B cell (primary cell): ENCODE measurements at regions of chr11 and their contacts with region 1.

Region 1: GRCh38 chr11:61332797-61333549 is at the starts of genes DDB1 and TKFC:
- DNase-seq: peak; percentile 91
- ATAC-seq: peak; percentile 93
- H3K4me3 ChIP-seq: peak within 1 kb of the TSS; percentile 75 to 97 (median 84)
- H3K4me3 Mint-ChIP-seq: peak within 1 kb of the TSS; percentile 98
- H3K27ac ChIP-seq: peak within 1 kb of the TSS; percentile 76 to 88
- H3K27ac Mint-ChIP-seq: peak within 1 kb of the TSS; percentile 97
- H3K4me1 ChIP-seq: peaks cover 30 to 35% of the 10 kb centered on the region in 2 donors
- H3K4me1 Mint-ChIP-seq: peaks cover 62% of the 10 kb centered on the region
- H3K27me3 ChIP-seq: no peaks in the 10 kb centered on the region
- H3K27me3 Mint-ChIP-seq: no peaks in the 10 kb centered on the region
- CTCF ChIP-seq: no peak
- total RNA-seq, gene DDB1: 155 and 167 TPM in 2 replicates
- total RNA-seq, gene TKFC: 68.2 and 86.3 TPM in 2 replicates

Region 2: GRCh38 chr11:60841797-60842667 is 490.9 kb before region 1 on chr11 and contains the start of gene CCDC86:
- CTCF ChIA-PET with region 1: no interaction called
- POLR2A ChIA-PET with region 1: no interaction called
- intact Hi-C with region 1: loop called (anchors 5 kb)
- DNase-seq: peak; percentile 98
- ATAC-seq: peak; percentile 97
- H3K4me3 ChIP-seq: peak within 1 kb of the TSS; percentile 54 to 97 (median 88)
- H3K4me3 Mint-ChIP-seq: peak within 1 kb of the TSS; percentile 93
- H3K27ac ChIP-seq: peak within 1 kb of the TSS; percentile 49 to 81
- H3K27ac Mint-ChIP-seq: peak within 1 kb of the TSS; percentile 93
- H3K4me1 ChIP-seq: peaks cover 32 to 33% of the 10 kb centered on the region in 2 donors
- H3K4me1 Mint-ChIP-seq: peaks cover 48% of the 10 kb centered on the region
- H3K27me3 ChIP-seq: no peaks in the 10 kb centered on the region
- H3K27me3 Mint-ChIP-seq: no peaks in the 10 kb centered on the region
- CTCF ChIP-seq: no peak
- total RNA-seq, gene CCDC86: 9.5 and 10.5 TPM in 2 replicates

Region 3: DNA sequence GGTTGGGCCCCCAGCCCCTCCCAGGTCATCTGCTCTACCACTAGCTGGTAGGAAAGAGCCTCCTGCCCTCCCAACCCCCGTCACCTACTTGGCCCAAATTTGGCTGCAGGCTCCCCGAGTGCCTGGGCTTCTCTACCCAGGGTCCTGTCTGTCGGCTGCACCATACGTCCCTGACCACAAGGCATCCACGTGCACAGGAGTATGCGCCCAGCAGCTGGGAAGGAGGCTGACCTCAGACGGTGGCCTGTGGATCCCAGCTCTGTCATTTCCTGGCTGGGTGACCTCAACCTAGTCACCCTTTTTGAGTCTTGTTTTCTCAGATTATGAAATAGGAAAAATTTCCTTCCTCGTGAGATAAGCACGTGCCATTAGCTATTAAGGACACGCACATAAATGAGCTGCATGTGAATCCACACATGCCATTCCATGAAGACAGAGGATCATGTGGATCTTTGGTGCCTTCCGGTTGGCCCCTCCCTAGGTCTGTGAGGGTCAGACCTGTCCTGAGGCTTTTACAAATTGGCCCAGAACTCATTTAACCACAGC is 15.0 kb after region 1 on chr11:
- CTCF ChIA-PET with region 1: interaction called, 436 read pairs
- POLR2A ChIA-PET with region 1: no interaction called
- intact Hi-C with region 1: no loop called
- DNase-seq: no peak
- ATAC-seq: no peak
- H3K4me3 ChIP-seq: no peak overlapping the region
- H3K4me3 Mint-ChIP-seq: no peak overlapping the region
- H3K27ac ChIP-seq: no peak overlapping the region
- H3K27ac Mint-ChIP-seq: peak overlapping the region; percentile 56
- H3K4me1 ChIP-seq: peaks cover 3 to 18% of the 10 kb centered on the region in 2 donors
- H3K4me1 Mint-ChIP-seq: peaks cover 36% of the 10 kb centered on the region
- H3K27me3 ChIP-seq: no peaks in the 10 kb centered on the region
- H3K27me3 Mint-ChIP-seq: no peaks in the 10 kb centered on the region
- CTCF ChIP-seq: no peak

Region 4: DNA sequence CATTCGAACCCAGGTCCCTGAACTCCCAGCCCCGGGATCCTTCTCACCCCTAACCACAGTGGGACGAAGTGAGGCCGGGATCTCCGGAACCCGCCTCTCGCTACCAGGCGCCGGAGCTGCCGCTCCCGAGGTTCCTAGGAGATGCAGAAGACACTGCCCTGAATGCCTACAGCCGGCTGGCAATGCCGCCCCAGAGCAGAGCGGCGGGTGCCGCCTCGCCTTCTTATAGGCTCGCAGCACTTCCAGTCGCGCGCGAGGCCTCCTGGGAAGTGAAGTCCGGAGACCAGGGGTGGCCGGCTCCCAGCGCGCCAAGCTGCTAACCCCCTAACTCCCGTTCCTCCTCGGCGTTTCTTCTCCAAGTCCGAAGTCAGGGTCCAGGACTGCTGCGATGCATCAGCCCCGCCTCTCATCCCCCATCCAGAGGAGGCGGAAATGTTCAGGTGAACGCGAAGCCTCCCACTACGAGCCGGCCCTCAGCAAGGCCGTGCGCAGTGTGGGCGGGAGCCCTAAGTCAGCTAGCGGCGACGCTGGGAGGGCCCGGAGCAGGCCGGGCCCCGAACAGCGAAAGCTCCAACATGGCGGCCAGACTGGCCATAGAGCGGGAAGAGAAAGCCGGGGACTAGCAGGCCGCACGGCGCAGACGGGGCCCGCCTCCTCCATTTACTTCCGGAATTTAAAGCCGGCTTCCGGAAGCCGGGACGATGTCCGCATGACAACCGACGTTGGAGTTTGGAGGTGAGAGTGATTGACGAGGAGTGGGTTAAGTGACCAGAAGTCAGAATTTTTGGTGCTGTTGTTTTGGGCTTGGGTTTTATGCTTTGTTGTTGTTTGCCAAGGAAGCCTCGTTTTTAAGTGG is 28.9 kb after region 1 on chr11 and contains the starts of genes CYB561A3 and TMEM138:
- CTCF ChIA-PET with region 1: interaction called, 436 read pairs
- POLR2A ChIA-PET with region 1: interaction called, 29 read pairs
- intact Hi-C with region 1: loop called (anchors 1 kb)
- DNase-seq: peak; percentile 94
- ATAC-seq: peak; percentile 72
- H3K4me3 ChIP-seq: peak within 1 kb of the TSS; percentile 86 to 99 (median 97)
- H3K4me3 Mint-ChIP-seq: peak within 1 kb of the TSS; percentile 99
- H3K27ac ChIP-seq: peak within 1 kb of the TSS; percentile 93
- H3K27ac Mint-ChIP-seq: peak within 1 kb of the TSS; percentile 98
- H3K4me1 ChIP-seq: peaks cover 44 to 50% of the 10 kb centered on the region in 2 donors
- H3K4me1 Mint-ChIP-seq: peaks cover 53% of the 10 kb centered on the region
- H3K27me3 ChIP-seq: no peaks in the 10 kb centered on the region
- H3K27me3 Mint-ChIP-seq: no peaks in the 10 kb centered on the region
- CTCF ChIP-seq: no peak
- total RNA-seq, gene CYB561A3: 248 and 259 TPM in 2 replicates
- total RNA-seq, gene TMEM138: 84.3 and 85.3 TPM in 2 replicates

Region 5: GRCh38 chr11:61384271-61385242 is 51.6 kb after region 1 on chr11:
- CTCF ChIA-PET with region 1: interaction called, 649 read pairs
- POLR2A ChIA-PET with region 1: interaction called, 30 read pairs
- intact Hi-C with region 1: loop called (anchors 1 kb)
- DNase-seq: no peak
- ATAC-seq: no peak
- H3K4me3 ChIP-seq: no peak overlapping the region
- H3K4me3 Mint-ChIP-seq: no peak overlapping the region
- H3K27ac ChIP-seq: no peak overlapping the region
- H3K27ac Mint-ChIP-seq: no peak overlapping the region
- H3K4me1 ChIP-seq: peaks cover 6 to 8% of the 10 kb centered on the region in 2 donors
- H3K4me1 Mint-ChIP-seq: peaks cover 8% of the 10 kb centered on the region
- H3K27me3 ChIP-seq: no peaks in the 10 kb centered on the region
- H3K27me3 Mint-ChIP-seq: no peaks in the 10 kb centered on the region
- CTCF ChIP-seq: no peak

Region 6: DNA sequence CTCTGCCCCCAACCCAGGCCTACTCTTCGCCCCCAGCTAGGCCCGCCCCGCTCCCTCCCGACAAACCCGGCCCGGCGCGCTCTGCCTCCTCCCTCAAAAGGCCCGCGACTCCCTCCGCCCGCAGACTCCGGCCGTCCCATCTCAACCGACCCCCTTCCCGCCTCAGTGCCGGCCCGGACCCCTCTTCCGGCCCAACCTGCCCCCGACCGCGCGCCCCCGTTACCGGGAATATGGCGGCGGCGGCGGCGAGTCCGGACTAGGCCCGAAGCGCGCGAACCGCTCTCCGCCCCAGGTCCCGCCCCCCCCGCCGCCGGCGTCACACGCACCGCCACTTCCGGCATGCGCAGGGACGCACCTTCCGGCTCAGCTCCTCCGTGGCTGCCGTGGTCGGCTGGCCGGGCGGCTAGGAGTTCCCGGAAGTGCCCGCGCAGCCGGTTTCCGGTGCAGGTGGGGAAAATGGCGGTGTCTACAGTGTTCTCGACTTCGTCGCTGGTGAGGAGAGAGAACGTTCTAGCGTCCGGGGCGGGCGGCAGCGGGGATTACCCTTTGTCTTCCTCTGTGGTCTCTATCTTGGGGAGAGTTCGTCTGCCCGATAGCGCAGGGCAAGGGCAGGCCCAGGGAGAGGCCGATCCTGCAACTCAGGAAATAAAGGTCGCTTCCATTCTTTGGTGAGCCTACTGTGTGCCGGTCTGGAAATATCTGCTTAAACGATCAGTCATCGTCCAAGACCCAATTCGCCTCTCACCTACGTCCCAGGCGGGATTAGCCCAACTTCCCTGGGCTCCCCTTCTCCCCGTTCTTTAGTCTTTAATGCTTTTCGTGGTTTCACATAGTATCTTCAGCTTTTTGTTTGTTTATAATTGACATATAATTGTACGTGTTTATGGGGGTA is 97.0 kb after region 1 on chr11 and contains the starts of genes CPSF7 and SDHAF2:
- CTCF ChIA-PET with region 1: interaction called, 32 read pairs
- POLR2A ChIA-PET with region 1: interaction called, 8 read pairs
- intact Hi-C with region 1: loop called (anchors 1 kb)
- DNase-seq: peak; percentile 98
- ATAC-seq: peak; percentile 85
- H3K4me3 ChIP-seq: peak within 1 kb of the TSS; percentile 77 to 96 (median 89)
- H3K4me3 Mint-ChIP-seq: peak within 1 kb of the TSS; percentile 100
- H3K27ac ChIP-seq: peak within 1 kb of the TSS; percentile 97 to 100
- H3K27ac Mint-ChIP-seq: peak within 1 kb of the TSS; percentile 100
- H3K4me1 ChIP-seq: peaks cover 18 to 27% of the 10 kb centered on the region in 2 donors
- H3K4me1 Mint-ChIP-seq: peaks cover 51% of the 10 kb centered on the region
- H3K27me3 ChIP-seq: no peaks in the 10 kb centered on the region
- H3K27me3 Mint-ChIP-seq: no peaks in the 10 kb centered on the region
- CTCF ChIP-seq: no peak
- total RNA-seq, gene CPSF7: 165 and 167 TPM in 2 replicates
- total RNA-seq, gene SDHAF2: 48.9 and 54.0 TPM in 2 replicates